ENCODE measurements at regions of chr16 and their contacts with region 1.

Region 1: DNA sequence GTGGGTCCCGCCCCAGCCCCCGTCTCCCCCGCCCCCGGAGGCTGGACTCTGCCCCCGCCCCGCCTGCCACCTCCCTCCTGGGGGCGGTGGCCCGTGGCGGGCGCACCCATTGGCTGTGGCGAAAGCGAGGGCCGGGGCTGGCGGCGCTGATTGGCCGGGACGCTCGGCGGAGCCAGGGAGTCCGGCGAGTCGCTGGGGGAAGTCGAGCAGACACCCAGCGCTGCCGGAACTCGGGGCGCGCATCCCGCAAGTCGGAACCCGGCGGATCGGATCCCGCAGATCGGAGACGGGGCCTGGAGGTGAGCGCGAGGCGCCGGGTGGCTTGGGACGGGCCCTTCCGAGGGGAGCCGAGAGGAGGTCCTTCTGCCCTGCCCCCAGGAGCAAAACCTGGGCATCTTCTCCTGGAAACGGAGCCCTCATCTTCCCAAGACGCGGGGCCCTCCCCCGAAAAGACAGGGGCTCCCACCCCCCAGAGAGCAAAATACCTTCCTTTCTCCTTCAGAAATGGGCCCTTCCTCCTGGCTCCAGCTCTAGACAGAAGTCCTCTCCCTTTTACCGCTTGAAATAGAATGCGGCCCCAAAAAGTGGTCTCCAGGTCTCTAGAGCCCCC is at the start of gene ABAT:
- DNase-seq: peak; percentile 98
- H3K4me3 ChIP-seq: peak within 1 kb of the TSS; percentile 77 to 83
- H3K27ac ChIP-seq: peak within 1 kb of the TSS in 1 of 2 experiments; percentile 72; a peak in 1 of 4 replicates
- H3K4me1 ChIP-seq: peaks cover 20 to 32% of the 10 kb centered on the region in 2 experiments; a peak in 2 of 4 replicates
- H3K27me3 ChIP-seq: no peaks in the 10 kb centered on the region
- CTCF ChIP-seq: no peak
- EP300 ChIP-seq: no peak
- RAD21 ChIP-seq: no peak
- polyA plus RNA-seq, gene ABAT: 4.7 and 7.3 TPM in 2 replicates

Region 2: DNA sequence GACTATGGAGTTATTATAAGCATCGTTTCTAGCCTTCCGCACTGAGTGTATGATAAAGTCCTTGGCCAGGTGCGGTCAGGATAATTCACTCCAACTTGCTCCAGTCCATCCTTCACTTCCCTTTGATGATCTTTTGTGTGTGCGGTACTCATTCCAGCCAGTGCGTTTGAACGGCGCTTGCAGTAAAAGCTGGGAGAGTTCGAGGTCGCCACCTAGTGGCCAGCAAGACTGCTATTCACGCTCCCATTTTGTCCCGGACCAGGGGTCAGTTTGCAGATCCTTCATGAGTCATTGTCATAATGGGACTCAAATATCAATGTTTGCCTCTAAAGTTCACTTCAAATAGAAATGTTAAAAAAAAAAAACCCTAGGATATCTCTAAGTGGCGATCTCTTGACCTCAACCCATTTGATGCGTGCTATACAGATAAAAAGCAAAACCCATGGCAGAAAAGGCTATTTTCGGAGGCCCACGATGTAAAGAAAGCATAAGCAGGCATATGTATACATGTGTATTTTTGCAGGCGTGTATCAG is 501.3 kb before region 1 on chr16:
- CTCF ChIA-PET with region 1: no interaction called
- POLR2A ChIA-PET with region 1: no interaction called
- DNase-seq: peak; percentile 67
- H3K4me3 ChIP-seq: no peak overlapping the region
- H3K27ac ChIP-seq: no peak overlapping the region
- H3K4me1 ChIP-seq: no peaks in the 10 kb centered on the region
- H3K27me3 ChIP-seq: no peaks in the 10 kb centered on the region
- CTCF ChIP-seq: peak; percentile 66
- EP300 ChIP-seq: no peak
- RAD21 ChIP-seq: peak; percentile 80

Region 3: DNA sequence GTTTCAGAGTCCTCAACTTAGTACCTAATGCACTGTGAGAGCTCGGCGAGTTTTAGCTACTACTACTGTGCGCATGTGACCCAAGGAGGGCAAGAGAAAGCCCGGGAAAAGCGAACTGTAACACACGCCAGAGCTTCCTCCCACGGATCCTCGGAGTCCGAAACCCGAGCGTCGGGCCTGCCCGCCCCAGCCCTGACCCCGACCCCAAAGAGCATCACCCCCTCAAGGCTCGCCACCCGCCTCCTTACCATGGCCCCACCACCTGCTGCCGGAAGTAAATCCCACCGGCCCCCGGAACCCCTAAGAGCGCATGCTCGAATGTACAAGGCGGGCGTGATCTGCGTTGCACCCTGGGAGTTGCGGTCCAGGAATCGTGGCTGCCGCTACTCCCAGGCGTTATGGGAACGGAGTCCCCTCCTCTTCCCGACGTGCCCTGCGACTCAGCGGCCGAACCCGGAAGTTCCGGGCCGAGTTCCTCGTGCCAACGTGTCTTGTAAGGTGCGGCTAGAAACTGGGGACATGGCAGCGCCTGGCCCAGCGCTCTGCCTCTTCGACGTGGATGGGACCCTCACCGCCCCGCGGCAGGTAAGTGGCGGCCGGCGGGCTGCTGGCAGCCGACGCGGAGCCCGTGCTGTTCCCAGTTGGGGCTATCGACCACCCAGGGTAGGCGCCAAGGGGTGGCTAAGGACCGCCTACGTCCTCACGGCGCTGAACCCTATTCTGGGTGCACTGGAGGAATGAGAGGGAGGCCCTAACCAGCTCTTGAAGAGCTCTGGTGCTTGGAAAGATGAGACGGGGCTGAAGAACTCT is 123.1 kb after region 1 on chr16 and contains the starts of genes PMM2 and TMEM186:
- CTCF ChIA-PET with region 1: interaction called, 28 read pairs
- POLR2A ChIA-PET with region 1: no interaction called
- DNase-seq: peak; percentile 98
- H3K4me3 ChIP-seq: peak within 1 kb of the TSS; percentile 86 to 94
- H3K27ac ChIP-seq: peak within 1 kb of the TSS; percentile 78 to 88
- H3K4me1 ChIP-seq: peaks cover 0 to 27% of the 10 kb centered on the region in 2 experiments
- H3K27me3 ChIP-seq: no peaks in the 10 kb centered on the region
- CTCF ChIP-seq: no peak
- EP300 ChIP-seq: peak in 1 of 2 experiments; percentile 17; a peak in 1 of 4 replicates
- RAD21 ChIP-seq: no peak
- polyA plus RNA-seq, gene PMM2: 24.3 and 27.6 TPM in 2 replicates
- polyA plus RNA-seq, gene TMEM186: 13.2 and 18.2 TPM in 2 replicates

Region 4: DNA sequence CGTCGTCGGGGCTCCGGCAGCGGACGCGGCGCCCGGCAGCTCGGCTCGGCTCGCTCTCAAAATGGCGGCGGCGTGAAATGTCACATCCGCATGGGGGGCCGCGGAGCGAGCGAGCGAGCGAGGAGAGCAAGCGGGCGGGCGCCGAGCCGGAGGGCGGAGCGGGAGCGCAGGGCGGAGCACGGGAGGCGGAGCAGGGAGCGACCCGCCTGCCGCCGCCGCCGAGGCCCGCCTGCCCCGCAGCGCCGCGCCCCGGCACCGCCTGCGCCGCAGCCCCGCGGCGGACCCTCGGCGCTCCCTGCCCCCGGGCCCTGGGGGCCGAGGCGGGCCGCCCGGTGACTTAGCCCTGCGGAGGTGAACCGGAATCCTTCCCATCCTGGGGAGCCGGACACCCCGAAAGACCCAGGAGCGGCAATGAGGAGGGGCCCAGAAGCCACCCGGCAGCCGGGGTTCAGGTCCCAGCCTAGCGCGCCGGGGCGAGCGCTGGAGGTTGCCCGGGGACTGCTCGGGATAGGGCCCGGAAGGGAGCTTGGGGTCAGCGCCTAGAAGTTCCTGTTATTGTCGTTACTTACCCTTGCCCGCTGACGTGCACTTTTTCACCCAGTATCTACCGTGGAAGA is 289.4 kb after region 1 on chr16 and contains the start of gene USP7:
- CTCF ChIA-PET with region 1: no interaction called
- POLR2A ChIA-PET with region 1: no interaction called
- DNase-seq: peak; percentile 98
- H3K4me3 ChIP-seq: peak within 1 kb of the TSS; percentile 79 to 88
- H3K27ac ChIP-seq: peak within 1 kb of the TSS; percentile 54 to 77; a peak in 3 of 4 replicates
- H3K4me1 ChIP-seq: peaks cover 27 to 34% of the 10 kb centered on the region in 2 experiments
- H3K27me3 ChIP-seq: no peaks in the 10 kb centered on the region
- CTCF ChIP-seq: no peak
- EP300 ChIP-seq: no peak
- RAD21 ChIP-seq: no peak
- polyA plus RNA-seq, gene USP7: 8.4 and 8.6 TPM in 2 replicates